ENCODE measurements at regions of chr2 and their contacts with region 1.

Region 1: GRCh38 chr2:48482313-48482712 is 47.6 kb upstream of the STON1 start:
- DNase-seq: no peak
- ATAC-seq: no peak
- H3K4me3 Mint-ChIP-seq: no peak overlapping the region
- H3K27ac Mint-ChIP-seq: no peak overlapping the region
- H3K4me1 Mint-ChIP-seq: peaks cover 0 to 4% (median 0%) of the 10 kb centered on the region in 4 donors
- H3K27me3 Mint-ChIP-seq: no peaks in the 10 kb centered on the region

Region 2: DNA sequence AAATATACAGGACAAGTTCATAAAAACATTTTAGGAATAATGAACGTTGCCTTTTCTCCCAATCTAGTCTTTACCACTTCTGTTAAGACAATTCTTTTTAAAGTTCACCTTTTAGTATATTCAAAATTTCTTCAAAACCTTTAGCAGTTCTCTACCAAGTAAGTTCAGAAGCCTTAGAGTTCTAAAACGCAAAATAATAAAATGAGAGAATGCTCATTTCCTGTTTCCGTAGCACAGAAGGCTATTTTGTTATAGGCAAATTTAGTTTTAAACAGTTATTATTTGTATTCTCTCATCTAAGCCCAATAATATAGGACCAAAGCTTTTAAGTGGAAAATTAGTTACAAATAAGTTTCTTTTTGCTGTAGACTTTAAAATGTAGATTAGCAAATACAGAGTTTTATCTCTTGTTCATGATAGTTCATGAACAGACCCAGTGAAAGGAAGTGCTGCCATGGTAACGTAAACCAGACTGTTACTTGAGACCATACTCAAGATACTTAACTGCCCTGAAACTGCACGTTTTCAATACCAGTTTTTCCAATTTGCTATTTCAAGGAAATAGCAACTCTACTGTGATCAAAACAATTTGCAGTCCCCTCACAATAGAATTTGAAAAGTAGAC is 125.5 kb before region 1 on chr2:
- POLR2A ChIA-PET with region 1: no interaction called
- DNase-seq: peak in 7 of 10 donors; percentile 4 to 76 (median 63)
- ATAC-seq: peak; percentile 94 to 95
- H3K4me3 Mint-ChIP-seq: peak overlapping the region; percentile 48 to 80 (median 74)
- H3K27ac Mint-ChIP-seq: peak overlapping the region; percentile 92 to 97 (median 94)
- H3K4me1 Mint-ChIP-seq: peaks cover 30 to 77% (median 65%) of the 10 kb centered on the region in 4 donors
- H3K27me3 Mint-ChIP-seq: no peaks in the 10 kb centered on the region

Region 3: DNA sequence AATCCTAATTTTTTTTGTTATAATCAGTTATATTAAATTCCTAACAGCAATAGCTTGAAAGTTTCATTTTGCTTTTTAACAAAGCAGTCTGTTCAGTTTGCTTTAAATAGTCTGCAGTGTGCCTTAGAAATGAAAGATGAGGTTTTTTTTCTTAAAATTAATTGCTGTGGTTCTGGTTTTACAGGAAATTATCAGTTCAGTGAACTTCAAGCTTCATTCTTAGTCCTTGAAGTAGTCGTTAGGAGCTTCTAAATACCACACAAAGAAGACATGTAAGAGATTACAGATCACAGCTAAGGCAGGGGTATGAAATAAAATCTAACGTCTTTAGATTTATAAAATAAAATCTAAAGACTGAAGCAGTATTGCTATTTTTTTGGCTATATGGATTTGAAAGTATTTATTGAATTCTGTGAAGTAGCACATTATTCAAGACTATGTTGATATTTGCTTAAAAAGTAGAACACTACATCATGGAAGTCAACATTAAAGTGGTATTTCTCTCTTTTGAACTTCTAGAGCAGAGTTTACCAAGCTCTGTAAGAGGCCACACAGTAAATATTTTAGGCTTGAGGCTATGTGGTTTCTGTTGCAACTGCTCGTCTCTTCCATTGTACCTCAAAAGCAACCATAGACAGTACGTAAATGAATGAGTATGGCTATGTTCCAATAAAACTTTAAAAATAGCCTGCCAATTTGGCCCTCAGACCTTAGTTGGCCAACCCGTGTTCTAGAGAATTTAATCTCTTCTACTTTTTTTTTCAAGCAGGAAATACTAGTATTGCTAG is 33.8 kb before region 1 on chr2:
- POLR2A ChIA-PET with region 1: no interaction called
- DNase-seq: peak in 5 of 10 donors; percentile 7 to 80 (median 59)
- ATAC-seq: peak; percentile 86 to 90
- H3K4me3 Mint-ChIP-seq: peak overlapping the region; percentile 54 to 83 (median 72)
- H3K27ac Mint-ChIP-seq: peak overlapping the region; percentile 84 to 96 (median 94)
- H3K4me1 Mint-ChIP-seq: peaks cover 23 to 65% (median 61%) of the 10 kb centered on the region in 4 donors
- H3K27me3 Mint-ChIP-seq: no peaks in the 10 kb centered on the region

Region 4: DNA sequence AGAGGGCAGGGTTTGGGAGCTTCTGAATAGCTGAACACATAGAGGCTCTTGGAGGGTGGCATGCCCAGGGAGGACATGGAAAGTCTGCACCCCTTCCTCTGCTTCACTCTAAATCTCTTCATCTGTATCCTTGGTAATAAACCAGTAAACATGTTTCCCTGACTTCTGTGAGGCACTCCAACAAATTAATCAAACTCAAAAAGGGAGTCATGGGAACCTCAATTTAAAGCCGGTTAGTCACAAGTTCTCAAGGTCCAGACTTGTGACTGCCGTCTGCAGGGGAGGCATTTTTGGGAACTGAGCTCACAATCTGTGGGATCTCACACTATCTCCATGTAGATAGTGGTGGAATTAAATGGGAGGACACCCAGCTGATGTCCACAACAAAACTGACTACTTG is 14.5 kb after region 1 on chr2:
- POLR2A ChIA-PET with region 1: no interaction called
- DNase-seq: no peak
- ATAC-seq: no peak
- H3K4me3 Mint-ChIP-seq: no peak overlapping the region
- H3K27ac Mint-ChIP-seq: no peak overlapping the region
- H3K4me1 Mint-ChIP-seq: peaks cover 0 to 4% (median under 1%) of the 10 kb centered on the region in 4 donors
- H3K27me3 Mint-ChIP-seq: no peaks in the 10 kb centered on the region

Region 5: DNA sequence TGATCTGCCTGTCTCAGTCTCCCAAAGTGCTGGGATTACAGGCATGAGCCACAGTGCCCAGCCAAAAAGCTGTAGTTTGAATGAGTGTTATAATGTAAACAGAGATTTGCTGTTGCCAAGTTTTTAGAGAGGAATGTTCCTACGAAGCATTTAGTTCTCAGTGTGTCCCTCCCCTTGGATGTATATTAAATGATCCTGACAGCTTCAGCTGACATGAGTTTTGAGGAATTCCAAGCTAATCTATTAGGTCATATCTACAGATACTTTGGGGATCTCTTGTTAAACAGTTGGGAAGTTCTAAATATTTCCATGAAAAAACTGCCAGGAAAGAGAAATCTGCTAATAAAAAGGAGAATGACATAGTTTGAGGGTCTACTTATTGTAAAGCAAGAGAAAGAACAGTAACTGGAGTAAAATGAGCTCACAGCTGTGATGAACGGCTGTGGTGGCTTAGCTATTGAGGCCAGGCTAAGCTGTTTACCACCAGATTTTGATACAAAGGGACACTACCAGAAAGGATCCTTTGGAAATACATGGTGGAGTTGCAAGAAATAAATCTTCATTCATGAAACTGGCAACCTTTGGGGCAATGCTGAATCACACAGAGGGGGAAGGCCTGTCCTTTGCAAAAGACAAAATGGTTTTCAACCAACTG is 45.0 kb after region 1 on chr2:
- POLR2A ChIA-PET with region 1: interaction called, 10 read pairs
- DNase-seq: no peak
- ATAC-seq: no peak
- H3K4me3 Mint-ChIP-seq: no peak overlapping the region
- H3K27ac Mint-ChIP-seq: peak overlapping the region in 1 of 10 donors; percentile 18
- H3K4me1 Mint-ChIP-seq: peaks cover 8 to 21% (median 14%) of the 10 kb centered on the region in 4 donors
- H3K27me3 Mint-ChIP-seq: no peaks in the 10 kb centered on the region